ENCODE measurements at regions of chr2 and their contacts with region 1.

Region 1: GRCh38 chr2:86623651-86624541 is at the start of gene RNF103:
- DNase-seq: peak; percentile 96 to 99 (median 98)
- H3K4me3 ChIP-seq: peak within 1 kb of the TSS; percentile 57 to 93 (median 85)
- H3K27ac ChIP-seq: peak within 1 kb of the TSS; percentile 80 to 99 (median 96)
- H3K27me3 ChIP-seq: no peaks in the 10 kb centered on the region
- CTCF ChIP-seq: peak in 19 of 56 donors; percentile 2 to 45 (median 22)
- total RNA-seq, gene RNF103: 37.3 to 62.1 (median 50.9) TPM

Region 2: GRCh38 chr2:86440631-86441391 is 183.1 kb before region 1 on chr2 and contains the start of gene KDM3A:
- intact Hi-C with region 1: loop called in 1 of 2 experiments (anchors 5 kb)
- DNase-seq: peak; percentile 96 to 99 (median 98)
- H3K4me3 ChIP-seq: peak within 1 kb of the TSS; percentile 52 to 90 (median 75)
- H3K27ac ChIP-seq: peak within 1 kb of the TSS; percentile 76 to 99 (median 95)
- H3K27me3 ChIP-seq: no peaks in the 10 kb centered on the region
- CTCF ChIP-seq: peak in 19 of 56 donors; percentile 2 to 37 (median 12)
- total RNA-seq, gene KDM3A: 38.5 to 96.1 (median 60.5) TPM

Region 3: DNA sequence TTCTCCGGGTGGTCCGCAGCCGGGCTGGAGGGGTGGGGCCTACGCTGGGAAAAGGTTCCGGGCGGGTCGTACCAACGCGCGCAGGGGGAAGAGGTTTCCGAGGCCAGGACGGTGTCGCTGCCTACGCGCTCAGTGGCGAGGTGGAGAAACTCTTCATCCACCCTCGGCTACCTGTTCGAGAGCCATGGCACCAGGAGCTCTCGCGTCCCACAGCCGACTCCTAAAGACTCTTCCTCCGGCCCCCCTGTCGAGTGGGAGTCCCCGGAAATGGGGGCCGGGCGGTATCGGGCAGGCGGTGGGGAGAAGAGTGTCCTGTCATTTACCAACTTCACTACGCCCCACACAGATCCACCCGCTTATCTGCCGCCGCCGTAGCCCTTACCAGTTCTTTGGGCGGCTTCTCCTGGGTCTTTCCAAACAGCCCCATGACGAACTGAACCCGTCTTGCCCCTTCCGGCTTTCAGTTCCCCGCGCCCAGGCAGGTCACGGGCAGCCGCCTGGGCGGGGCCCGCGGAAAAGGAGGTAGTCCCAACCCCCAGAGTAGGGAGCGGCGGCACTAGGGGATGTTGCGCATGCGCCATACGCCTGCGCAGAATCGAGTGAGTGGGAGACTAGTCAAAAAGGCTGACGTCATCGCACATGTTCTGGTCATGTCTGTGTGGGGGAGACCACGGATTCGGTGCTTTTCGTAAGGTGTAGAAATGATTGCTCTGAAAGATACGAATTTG is 60.8 kb before region 1 on chr2 and contains the start of gene CHMP3:
- intact Hi-C with region 1: loop called (anchors 1 kb)
- DNase-seq: peak; percentile 88 to 96 (median 94)
- H3K4me3 ChIP-seq: peak within 1 kb of the TSS; percentile 52 to 95 (median 83)
- H3K27ac ChIP-seq: peak within 1 kb of the TSS; percentile 91 to 100 (median 99)
- H3K27me3 ChIP-seq: no peaks in the 10 kb centered on the region
- CTCF ChIP-seq: peak in 13 of 56 donors; percentile 7 to 39 (median 12)
- total RNA-seq, gene CHMP3: 70.7 to 207 (median 128) TPM

Region 4: DNA sequence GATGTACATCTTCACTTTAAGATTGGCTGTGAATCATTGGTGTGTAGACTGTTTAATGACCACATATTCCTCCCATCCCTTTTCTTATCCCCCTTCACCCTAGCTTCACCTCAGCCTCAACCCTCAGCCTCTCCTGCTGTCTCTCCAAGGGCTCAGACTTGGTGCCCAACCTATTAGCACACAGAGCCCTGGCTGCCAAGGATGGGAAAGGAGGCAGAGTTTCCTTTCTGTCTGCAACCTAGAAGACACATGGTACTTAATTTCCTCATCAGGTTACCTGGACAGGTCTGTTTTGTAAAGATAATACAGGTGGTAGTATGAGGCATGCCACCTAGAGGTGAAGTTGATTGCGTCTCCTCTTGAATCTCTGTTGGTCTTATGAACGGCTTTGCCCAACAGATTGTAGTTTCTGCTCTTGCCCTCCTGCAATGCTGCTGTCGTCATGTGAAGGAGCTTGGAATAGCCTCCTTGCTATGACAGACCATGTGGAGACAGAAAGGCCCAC is 51.7 kb after region 1 on chr2:
- intact Hi-C with region 1: loop called in 1 of 2 experiments (anchors 10 kb)
- DNase-seq: no peak
- H3K4me3 ChIP-seq: no peak overlapping the region
- H3K27ac ChIP-seq: peak overlapping the region in 50 of 59 donors; percentile 10 to 86 (median 72)
- H3K27me3 ChIP-seq: no peaks in the 10 kb centered on the region
- CTCF ChIP-seq: peak in 4 of 56 donors; percentile 6 to 25 (median 16)

Region 5: DNA sequence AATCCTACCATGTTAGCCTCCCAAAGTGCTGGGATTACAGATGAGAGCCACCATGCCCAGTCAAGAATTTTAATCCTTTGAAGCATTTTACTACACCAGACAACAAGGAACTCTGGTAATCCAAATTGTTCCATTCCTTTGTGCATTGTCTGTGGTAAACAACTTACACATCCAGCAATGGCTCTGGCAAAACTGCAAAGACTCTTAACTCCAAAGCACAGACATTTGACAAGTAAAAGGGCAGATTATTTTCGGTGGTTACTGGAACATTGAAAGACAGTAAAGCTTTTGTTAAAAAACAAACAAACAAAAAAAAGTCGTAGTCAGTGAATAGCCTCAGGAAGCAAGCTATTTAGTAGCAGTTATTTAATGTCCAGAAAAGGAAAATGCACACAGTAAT is 63.0 kb after region 1 on chr2:
- intact Hi-C with region 1: loop called in 1 of 2 experiments (anchors 1 kb)
- DNase-seq: peak in 1 of 10 donors; percentile 22
- H3K4me3 ChIP-seq: peak overlapping the region in 7 of 59 donors; percentile 1 to 42 (median 9)
- H3K27ac ChIP-seq: peak overlapping the region in 57 of 59 donors; percentile 2 to 94 (median 70)
- H3K27me3 ChIP-seq: no peaks in the 10 kb centered on the region
- CTCF ChIP-seq: peak in 2 of 56 donors; percentile 15 to 19

Region 6: GRCh38 chr2:86764661-86765307 is 140.9 kb after region 1 on chr2:
- intact Hi-C with region 1: loop called (anchors 5 to 10 kb)
- DNase-seq: peak in 1 of 10 donors; percentile 37
- H3K4me3 ChIP-seq: no peak overlapping the region
- H3K27ac ChIP-seq: peak overlapping the region in 2 of 59 donors; percentile 27 to 40
- H3K27me3 ChIP-seq: no peaks in the 10 kb centered on the region
- CTCF ChIP-seq: peak; percentile 43 to 83 (median 70)

Region 7: GRCh38 chr2:86831537-86831936 is 207.6 kb after region 1 on chr2:
- intact Hi-C with region 1: no loop called
- DNase-seq: no peak
- H3K4me3 ChIP-seq: no peak overlapping the region
- H3K27ac ChIP-seq: no peak overlapping the region
- H3K27me3 ChIP-seq: peaks cover 0 to 5% (median 0%) of the 10 kb centered on the region in 45 donors
- CTCF ChIP-seq: no peak

Measured in dorsolateral prefrontal cortex (tissue), 120 donors.